Spleen (tissue), 13 donors: ENCODE measurements at regions of chr5 and their contacts with region 1.

Region 1: DNA sequence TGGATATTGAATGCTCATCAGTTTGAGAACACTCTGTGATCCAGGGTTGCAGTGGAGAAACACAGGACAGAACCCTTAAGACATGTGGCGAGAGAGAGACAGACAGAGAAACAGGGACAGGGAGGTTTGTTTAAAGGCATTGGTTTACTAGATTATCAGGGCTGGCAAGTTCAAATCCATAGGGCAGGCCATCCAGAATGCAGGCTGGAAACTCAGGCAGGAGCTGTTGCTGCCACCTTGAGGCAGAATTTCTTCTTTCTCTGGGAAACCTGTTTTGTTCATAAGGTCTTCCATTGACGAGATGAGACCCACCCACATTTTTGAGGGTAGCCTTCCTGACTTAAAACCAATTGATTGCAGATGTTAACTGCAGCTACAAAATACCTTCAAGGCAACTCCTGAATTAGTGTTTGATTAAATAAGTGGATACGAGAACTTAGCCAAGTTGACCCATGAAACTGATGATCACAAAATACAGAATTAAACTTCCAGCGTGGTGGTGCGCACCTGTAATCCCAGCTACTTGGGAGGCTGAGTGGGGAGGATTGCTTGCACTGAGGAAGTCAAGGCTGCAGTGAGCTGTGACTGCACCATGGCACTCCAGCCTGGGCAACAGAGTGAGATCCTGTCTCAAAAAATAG is 55.9 kb downstream of the NSUN2 start:
- DNase-seq: no peak
- H3K4me3 ChIP-seq: no peak overlapping the region
- H3K27ac ChIP-seq: no peak overlapping the region
- H3K4me1 ChIP-seq: no peaks in the 10 kb centered on the region
- H3K27me3 ChIP-seq: peaks cover 0 to 68% (median 7%) of the 10 kb centered on the region in 7 donors
- CTCF ChIP-seq: peak in 5 of 11 experiments; percentile 4 to 25 (median 18)
- POLR2A ChIP-seq: no peak

Region 2: GRCh38 chr5:5505815-5506214 is 1071.2 kb before region 1 on chr5:
- intact Hi-C with region 1: loop called (anchors 10 kb)
- DNase-seq: no peak
- H3K4me3 ChIP-seq: no peak overlapping the region
- H3K27ac ChIP-seq: no peak overlapping the region
- H3K4me1 ChIP-seq: no peaks in the 10 kb centered on the region
- H3K27me3 ChIP-seq: peaks cover 0 to 5% (median 0%) of the 10 kb centered on the region in 7 donors
- CTCF ChIP-seq: no peak
- POLR2A ChIP-seq: no peak

Region 3: DNA sequence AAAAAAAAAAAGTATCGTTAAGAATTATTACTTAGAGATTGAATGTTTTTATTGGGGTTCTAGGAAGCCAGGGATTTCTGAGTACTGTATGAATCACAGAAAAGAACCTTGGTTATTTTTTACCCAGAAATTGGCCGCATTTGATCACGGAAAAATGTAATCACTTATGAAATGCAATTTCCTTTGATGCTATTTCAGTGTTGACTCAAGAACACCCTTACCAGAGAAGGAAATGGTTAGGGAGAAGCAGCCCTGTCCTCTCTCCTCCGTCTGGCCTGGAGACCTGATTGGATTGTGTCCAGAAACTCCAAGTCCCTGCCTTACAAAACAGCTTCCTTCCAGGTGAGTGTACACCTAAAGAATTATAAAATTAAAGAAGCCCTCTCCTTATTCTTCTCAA is 315.3 kb before region 1 on chr5:
- intact Hi-C with region 1: no loop called
- DNase-seq: no peak
- H3K4me3 ChIP-seq: no peak overlapping the region
- H3K27ac ChIP-seq: no peak overlapping the region
- H3K4me1 ChIP-seq: no peaks in the 10 kb centered on the region
- H3K27me3 ChIP-seq: no peaks in the 10 kb centered on the region
- CTCF ChIP-seq: no peak
- POLR2A ChIP-seq: no peak

Region 4: GRCh38 chr5:6804766-6805501 is 228.0 kb after region 1 on chr5:
- intact Hi-C with region 1: no loop called
- DNase-seq: no peak
- H3K4me3 ChIP-seq: no peak overlapping the region
- H3K27ac ChIP-seq: no peak overlapping the region
- H3K4me1 ChIP-seq: no peaks in the 10 kb centered on the region
- H3K27me3 ChIP-seq: peaks cover 0 to 4% (median 0%) of the 10 kb centered on the region in 7 donors
- CTCF ChIP-seq: no peak
- POLR2A ChIP-seq: no peak